Activated naive CD4-positive, alpha-beta T cell treated with anti-CD3 and anti-CD28 coated beads, Interleukin-2, amount 10 ng/mL, durations not matched to agents 7 days and 5 days (primary cell): ENCODE measurements at regions of chr12 and their contacts with region 1.

Region 1: DNA sequence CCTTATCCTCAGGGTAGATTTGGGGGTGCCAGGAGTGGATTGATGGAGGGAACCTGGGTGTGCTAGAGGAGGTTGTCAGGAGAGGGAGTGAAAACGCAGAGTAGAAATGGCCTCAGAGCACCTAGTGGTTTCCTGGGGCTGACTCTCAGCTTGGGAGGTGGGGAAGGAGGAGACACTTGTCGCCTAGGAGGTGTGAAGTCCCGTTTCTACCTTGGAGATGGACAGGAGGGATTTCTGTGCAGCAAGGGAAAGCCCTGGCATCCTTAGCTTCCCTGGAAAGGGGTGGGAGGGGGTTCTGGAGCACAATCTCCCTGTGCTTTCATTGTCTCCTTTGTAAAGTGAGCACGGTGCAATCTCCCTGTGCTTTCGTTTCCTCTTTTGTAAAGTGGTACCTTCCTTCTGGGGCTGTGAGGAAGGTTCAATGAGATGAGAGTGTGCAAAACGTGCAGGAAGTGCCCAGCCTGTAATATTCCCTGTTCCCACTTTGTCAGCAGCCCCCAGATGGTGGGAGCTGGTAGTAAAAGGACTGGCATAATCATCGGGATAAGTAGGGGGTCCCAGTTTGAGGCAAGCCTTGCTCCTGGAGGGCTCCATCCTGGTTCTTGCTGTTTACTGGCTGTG is 1.6 kb downstream of the OAS3 start:
- DNase-seq: peak; percentile 41
- H3K4me3 Mint-ChIP-seq: peak overlapping the region; percentile 78
- H3K27ac Mint-ChIP-seq: peak overlapping the region; percentile 86
- H3K4me1 Mint-ChIP-seq: peaks cover 33% of the 10 kb centered on the region
- H3K27me3 Mint-ChIP-seq: no peaks in the 10 kb centered on the region

Region 2: DNA sequence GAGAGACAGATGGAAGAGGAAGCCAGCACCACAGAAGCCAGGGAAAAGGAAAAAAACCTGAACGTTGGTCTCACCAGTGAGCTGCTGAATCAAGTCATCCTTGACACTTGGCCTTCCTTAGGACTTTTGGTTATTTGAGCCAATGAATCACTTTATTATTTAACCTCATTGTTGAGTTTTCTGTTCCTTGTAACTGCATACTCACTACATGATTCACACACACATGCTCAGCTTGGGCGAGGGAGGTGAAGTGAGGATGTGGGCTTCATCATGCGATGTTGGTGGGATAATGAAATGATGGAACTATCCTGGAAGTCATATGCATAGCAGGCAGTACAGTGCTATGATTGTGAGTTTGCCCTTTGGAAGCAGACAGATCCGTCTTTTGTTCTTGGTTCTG is 188.9 kb before region 1 on chr12:
- CTCF ChIA-PET with region 1: no interaction called
- DNase-seq: no peak
- H3K4me3 Mint-ChIP-seq: no peak overlapping the region
- H3K27ac Mint-ChIP-seq: no peak overlapping the region
- H3K4me1 Mint-ChIP-seq: peaks cover 7% of the 10 kb centered on the region
- H3K27me3 Mint-ChIP-seq: peaks cover 9% of the 10 kb centered on the region

Region 3: GRCh38 chr12:112900299-112901145 is 39.3 kb before region 1 on chr12:
- CTCF ChIA-PET with region 1: interaction called, 10 read pairs
- DNase-seq: peak; percentile 57
- H3K4me3 Mint-ChIP-seq: no peak overlapping the region
- H3K27ac Mint-ChIP-seq: no peak overlapping the region
- H3K4me1 Mint-ChIP-seq: peaks cover 38% of the 10 kb centered on the region
- H3K27me3 Mint-ChIP-seq: peaks cover 29% of the 10 kb centered on the region

Region 4: DNA sequence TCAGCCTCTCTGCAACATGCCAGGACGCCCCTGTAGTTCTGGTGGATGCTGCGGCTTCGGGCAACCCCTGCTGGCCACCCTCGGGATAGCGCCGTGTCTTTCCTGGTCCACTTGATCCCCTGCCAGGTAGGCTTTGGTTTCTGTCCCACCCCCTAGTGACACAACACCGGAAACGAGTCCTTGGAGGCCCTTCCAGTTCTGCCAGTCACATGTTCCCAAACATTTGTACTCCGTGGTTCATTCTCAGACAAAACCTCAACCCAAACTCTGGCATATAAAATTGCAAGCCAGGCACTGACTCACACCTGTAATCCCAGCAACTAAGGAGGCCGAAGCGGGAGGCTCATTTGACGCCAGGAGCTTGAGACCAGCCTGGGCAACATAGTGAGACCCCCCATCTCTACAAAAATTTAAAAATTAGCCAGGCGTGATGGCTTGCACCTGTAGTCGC is 158.6 kb after region 1 on chr12:
- CTCF ChIA-PET with region 1: no interaction called
- DNase-seq: peak; percentile 76
- H3K4me3 Mint-ChIP-seq: no peak overlapping the region
- H3K27ac Mint-ChIP-seq: no peak overlapping the region
- H3K4me1 Mint-ChIP-seq: peaks cover 2% of the 10 kb centered on the region
- H3K27me3 Mint-ChIP-seq: peaks cover 4% of the 10 kb centered on the region